A673 (cell line): ENCODE measurements at regions of chr18 and their contacts with region 1.

Region 1: GRCh38 chr18:79679111-79679872 is at the start of gene CTDP1:
- DNase-seq: peak; percentile 99
- H3K4me3 ChIP-seq: peak within 1 kb of the TSS; percentile 67
- H3K27ac ChIP-seq: peak within 1 kb of the TSS; percentile 98
- H3K4me1 ChIP-seq: peaks cover 23% of the 10 kb centered on the region
- H3K27me3 ChIP-seq: no peaks in the 10 kb centered on the region
- CTCF ChIP-seq: no peak
- total RNA-seq, gene CTDP1: 22.5 and 22.6 TPM in 2 replicates

Region 2: GRCh38 chr18:79964330-79965118 is 285.2 kb after region 1 on chr18 and contains the start of gene HSBP1L1:
- CTCF ChIA-PET with region 1: no interaction called
- POLR2A ChIA-PET with region 1: no interaction called
- intact Hi-C with region 1: loop called (anchors 10 kb)
- DNase-seq: peak; percentile 57
- H3K4me3 ChIP-seq: peak within 1 kb of the TSS; percentile 63
- H3K27ac ChIP-seq: peak within 1 kb of the TSS; percentile 70
- H3K4me1 ChIP-seq: peaks cover 16% of the 10 kb centered on the region
- H3K27me3 ChIP-seq: no peaks in the 10 kb centered on the region
- CTCF ChIP-seq: no peak; the same call in 1 of the 2 replicates
- total RNA-seq, gene HSBP1L1: 1.1 and 1.9 TPM in 2 replicates